Activated CD4-positive, alpha-beta memory T cell treated with anti-CD3 and anti-CD28 coated beads for 36 hours (primary cell): ENCODE measurements at regions of chr1 and their contacts with region 1.

Region 1: DNA sequence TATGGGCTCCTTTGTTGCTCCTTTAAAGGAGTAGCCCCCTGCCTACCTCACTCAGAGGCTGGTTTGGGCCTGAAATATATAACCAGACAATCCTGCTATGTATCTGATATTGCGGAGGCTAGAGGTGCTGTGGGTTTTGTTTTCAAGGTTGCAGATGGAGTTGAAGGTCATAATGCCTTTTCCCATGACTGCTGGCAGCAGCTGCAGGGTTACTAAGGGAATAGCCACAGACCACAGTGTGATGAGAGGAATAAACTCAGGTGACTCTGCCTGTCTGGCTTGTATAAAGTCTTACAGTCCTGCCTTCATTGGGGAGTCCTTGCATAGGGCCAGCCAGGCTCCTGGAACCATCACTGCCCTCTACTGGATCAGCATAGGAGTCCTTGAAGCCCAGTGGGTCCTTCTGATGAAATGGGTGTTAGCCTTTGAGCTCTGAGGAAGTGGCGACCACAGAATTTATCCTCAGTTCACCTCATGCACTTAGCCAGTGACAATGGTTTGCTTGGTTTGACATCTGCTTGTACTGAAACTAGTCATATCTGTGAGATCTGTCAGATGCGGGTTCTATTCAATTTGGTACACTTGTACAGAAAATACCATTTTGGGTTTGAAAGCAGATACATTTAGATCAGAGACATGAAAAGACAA is 174.4 kb upstream of the HMCN1 start:
- DNase-seq: peak; percentile 74
- H3K4me3 Mint-ChIP-seq: no peak overlapping the region
- H3K27ac Mint-ChIP-seq: peak overlapping the region; percentile 69
- H3K4me1 Mint-ChIP-seq: peaks cover 36% of the 10 kb centered on the region
- H3K27me3 Mint-ChIP-seq: no peaks in the 10 kb centered on the region

Region 2: DNA sequence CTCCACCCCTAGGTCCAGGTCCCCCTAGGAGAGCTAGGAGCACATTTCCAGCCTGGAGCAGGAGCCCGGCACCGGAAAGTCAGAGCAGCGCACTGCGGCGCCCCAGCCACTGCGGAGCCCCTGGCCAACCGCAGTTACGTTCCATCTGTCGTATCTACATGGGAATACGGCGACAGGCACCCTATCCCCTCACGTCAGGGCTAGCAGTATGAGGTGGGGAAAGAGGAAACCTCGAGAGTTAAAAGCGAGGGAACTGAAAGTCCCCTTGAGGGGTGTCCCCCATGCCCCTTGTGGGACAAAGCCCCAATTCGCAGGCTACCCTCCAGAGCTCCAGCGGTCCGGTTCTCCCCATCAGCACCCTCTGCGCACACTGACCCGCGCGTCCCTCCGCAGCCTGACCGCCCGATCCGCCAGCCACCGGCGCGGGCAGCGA is 1523.3 kb before region 1 on chr1:
- CTCF ChIA-PET with region 1: no interaction called
- POLR2A ChIA-PET with region 1: no interaction called
- intact Hi-C with region 1: loop called (anchors 5 kb)
- DNase-seq: peak; percentile 23
- H3K4me3 Mint-ChIP-seq: peak overlapping the region; percentile 62
- H3K27ac Mint-ChIP-seq: no peak overlapping the region
- H3K4me1 Mint-ChIP-seq: peaks cover 12% of the 10 kb centered on the region
- H3K27me3 Mint-ChIP-seq: peaks cover 50% of the 10 kb centered on the region

Region 3: GRCh38 chr1:185238447-185238846 is 321.4 kb before region 1 on chr1:
- CTCF ChIA-PET with region 1: no interaction called
- POLR2A ChIA-PET with region 1: no interaction called
- intact Hi-C with region 1: loop called (anchors 2 kb)
- DNase-seq: no peak
- H3K4me3 Mint-ChIP-seq: no peak overlapping the region
- H3K27ac Mint-ChIP-seq: no peak overlapping the region
- H3K4me1 Mint-ChIP-seq: peaks cover 28% of the 10 kb centered on the region
- H3K27me3 Mint-ChIP-seq: no peaks in the 10 kb centered on the region

Region 4: GRCh38 chr1:185439727-185440415 is 119.9 kb before region 1 on chr1:
- CTCF ChIA-PET with region 1: interaction called, 5 read pairs
- POLR2A ChIA-PET with region 1: no interaction called
- intact Hi-C with region 1: loop called (anchors 2 kb)
- DNase-seq: peak; percentile 49
- H3K4me3 Mint-ChIP-seq: no peak overlapping the region
- H3K27ac Mint-ChIP-seq: no peak overlapping the region
- H3K4me1 Mint-ChIP-seq: peaks cover 8% of the 10 kb centered on the region
- H3K27me3 Mint-ChIP-seq: no peaks in the 10 kb centered on the region

Region 5: DNA sequence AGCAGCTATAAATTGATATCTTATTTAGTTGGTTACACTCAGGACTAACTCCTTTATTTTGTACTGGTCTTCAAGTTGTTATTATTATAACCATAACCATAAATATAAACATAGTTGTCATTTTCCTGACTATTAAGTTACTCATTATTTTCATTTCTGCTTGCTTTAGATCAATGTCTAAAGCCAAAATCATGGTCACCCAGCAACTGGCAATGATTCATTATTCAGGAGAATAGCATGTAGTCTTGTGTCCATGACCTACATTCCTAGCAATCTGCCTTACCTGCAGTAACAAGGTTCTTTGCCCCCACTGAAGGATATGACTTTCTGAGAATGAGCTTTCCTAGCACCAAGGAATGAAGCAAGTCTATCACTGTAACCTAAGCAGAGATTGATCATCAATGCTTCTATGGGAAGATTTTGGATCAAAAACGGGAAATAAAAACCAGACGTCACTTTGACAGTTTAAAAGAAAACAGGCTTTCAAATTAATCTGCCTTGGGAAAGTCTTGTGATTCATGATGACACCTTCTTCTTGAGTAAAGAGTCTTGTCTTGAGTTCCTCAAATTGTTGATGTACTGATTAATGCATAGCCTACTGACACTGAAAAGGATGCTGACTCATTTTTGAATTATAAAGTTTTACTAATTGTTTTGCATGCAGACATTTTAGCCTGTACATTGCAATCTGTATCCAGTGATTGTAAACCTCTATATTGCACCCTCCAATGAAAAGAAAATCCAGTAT is 39.4 kb before region 1 on chr1:
- CTCF ChIA-PET with region 1: no interaction called
- POLR2A ChIA-PET with region 1: no interaction called
- intact Hi-C with region 1: no loop called
- DNase-seq: no peak
- H3K4me3 Mint-ChIP-seq: no peak overlapping the region
- H3K27ac Mint-ChIP-seq: peak overlapping the region; percentile 78
- H3K4me1 Mint-ChIP-seq: peaks cover 4% of the 10 kb centered on the region
- H3K27me3 Mint-ChIP-seq: no peaks in the 10 kb centered on the region

Region 6: GRCh38 chr1:185595835-185596667 is 36.2 kb after region 1 on chr1:
- CTCF ChIA-PET with region 1: interaction called, 22 read pairs
- POLR2A ChIA-PET with region 1: no interaction called
- intact Hi-C with region 1: no loop called
- DNase-seq: peak; percentile 55
- H3K4me3 Mint-ChIP-seq: no peak overlapping the region
- H3K27ac Mint-ChIP-seq: no peak overlapping the region
- H3K4me1 Mint-ChIP-seq: peaks cover 23% of the 10 kb centered on the region
- H3K27me3 Mint-ChIP-seq: no peaks in the 10 kb centered on the region

Region 7: DNA sequence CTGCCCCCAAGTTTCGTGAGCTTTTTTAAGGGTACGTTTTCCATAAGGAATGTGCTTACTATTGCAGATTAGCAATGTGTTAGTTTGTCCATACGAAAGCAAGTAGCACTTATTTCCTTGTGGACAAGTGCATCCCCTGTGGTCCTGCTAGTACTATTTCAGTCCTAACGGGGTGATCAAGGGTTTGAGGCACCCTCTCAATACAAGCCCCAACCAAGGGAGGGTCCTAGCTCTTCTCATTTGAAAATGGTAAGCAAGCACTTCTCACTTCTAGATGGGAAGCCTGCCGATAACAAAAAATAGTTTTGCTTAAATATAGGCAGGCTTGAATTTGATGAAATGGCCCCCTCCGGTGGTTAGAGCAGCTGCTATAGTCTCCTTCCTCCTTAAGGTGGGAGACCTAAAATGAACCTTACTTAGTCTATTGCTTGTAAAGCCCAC is 110.4 kb after region 1 on chr1:
- CTCF ChIA-PET with region 1: interaction called, 3 read pairs
- POLR2A ChIA-PET with region 1: no interaction called
- intact Hi-C with region 1: loop called (anchors 5 kb)
- DNase-seq: peak; percentile 57
- H3K4me3 Mint-ChIP-seq: no peak overlapping the region
- H3K27ac Mint-ChIP-seq: no peak overlapping the region
- H3K4me1 Mint-ChIP-seq: peaks cover 15% of the 10 kb centered on the region
- H3K27me3 Mint-ChIP-seq: no peaks in the 10 kb centered on the region